CD4-positive, alpha-beta memory T cell (primary cell): ENCODE measurements at regions of chr14 and their contacts with region 1.

Region 1: DNA sequence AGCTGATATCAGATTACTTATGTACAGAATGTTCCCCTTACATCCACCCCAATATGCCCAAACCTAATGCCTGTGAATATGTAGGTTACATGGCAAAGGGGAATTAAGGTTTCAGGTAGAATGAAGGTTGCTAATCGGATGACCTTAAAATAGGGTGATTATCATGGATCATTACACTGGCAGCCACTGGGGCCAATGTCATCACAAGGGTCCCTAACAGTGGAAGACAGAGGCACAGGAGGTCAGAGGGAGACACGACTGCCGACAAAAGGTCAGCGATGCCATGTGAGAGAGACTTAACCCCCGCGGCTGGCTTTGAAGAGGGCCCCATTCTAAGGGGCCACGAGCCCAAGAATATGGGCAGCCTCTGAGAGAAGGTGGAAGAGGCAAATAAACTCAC is 106.8 kb upstream of the EVL start:
- DNase-seq: no peak
- H3K4me3 ChIP-seq: no peak overlapping the region
- H3K4me3 Mint-ChIP-seq: no peak overlapping the region
- H3K27ac ChIP-seq: no peak overlapping the region
- H3K27ac Mint-ChIP-seq: no peak overlapping the region
- H3K4me1 ChIP-seq: no peaks in the 10 kb centered on the region
- H3K4me1 Mint-ChIP-seq: no peaks in the 10 kb centered on the region
- H3K27me3 ChIP-seq: no peaks in the 10 kb centered on the region
- H3K27me3 Mint-ChIP-seq: peaks cover 7 to 25% of the 10 kb centered on the region in 2 donors

Region 2: DNA sequence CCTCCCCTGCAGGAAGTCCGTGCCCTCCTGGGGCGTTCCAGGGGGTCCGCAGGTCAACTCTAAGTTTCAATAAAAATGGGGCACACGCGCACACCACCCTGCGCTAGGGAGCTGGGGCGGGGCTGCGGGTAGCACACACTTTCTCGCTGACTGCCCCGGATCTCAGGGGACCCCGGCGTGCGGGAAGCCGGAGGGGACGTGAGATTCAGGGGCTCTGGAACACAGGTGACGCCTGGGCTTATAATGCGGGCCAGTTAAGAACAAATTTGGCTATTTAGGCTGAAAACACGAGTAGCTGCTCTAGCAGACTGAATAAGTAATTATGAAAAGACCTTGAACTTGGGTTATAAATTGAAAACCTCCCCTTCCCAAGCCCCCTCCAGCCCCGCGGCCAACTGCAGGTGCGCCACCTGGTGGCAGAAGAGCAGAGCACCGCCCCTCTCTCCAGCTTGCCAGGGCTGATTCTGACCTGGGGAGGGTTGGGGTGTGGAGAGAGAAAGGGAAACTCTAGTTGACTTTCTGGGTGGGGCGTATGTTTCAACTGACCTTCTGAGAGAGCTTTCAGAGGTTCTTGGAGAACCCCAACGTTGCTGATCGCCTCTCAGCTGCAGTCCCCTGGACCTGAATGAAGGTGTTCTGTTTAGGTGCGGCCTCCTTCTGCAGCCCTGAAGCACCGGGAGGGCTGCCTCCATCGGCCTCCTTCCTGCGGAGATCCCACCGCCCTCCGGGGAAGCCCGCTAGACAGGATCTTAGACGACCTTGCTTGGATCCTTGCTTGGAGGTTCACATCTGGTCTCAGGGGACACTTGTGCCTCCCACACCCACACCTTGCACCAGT is 11.5 kb before region 1 on chr14:
- CTCF ChIA-PET with region 1: interaction called, 12 read pairs
- POLR2A ChIA-PET with region 1: no interaction called
- intact Hi-C with region 1: no loop called
- DNase-seq: peak; percentile 34 to 47 (median 42)
- H3K4me3 ChIP-seq: no peak overlapping the region
- H3K4me3 Mint-ChIP-seq: peak overlapping the region; percentile 29 to 77 (median 67)
- H3K27ac ChIP-seq: no peak overlapping the region
- H3K27ac Mint-ChIP-seq: peak overlapping the region in 1 of 7 donors; percentile 35
- H3K4me1 ChIP-seq: peaks cover 14% of the 10 kb centered on the region
- H3K4me1 Mint-ChIP-seq: peaks cover 3 to 10% (median 8%) of the 10 kb centered on the region in 4 donors
- H3K27me3 ChIP-seq: peaks cover 13% of the 10 kb centered on the region
- H3K27me3 Mint-ChIP-seq: peaks cover 14 to 15% of the 10 kb centered on the region in 2 donors

Region 3: GRCh38 chr14:99995700-99996356 is 37.4 kb after region 1 on chr14:
- CTCF ChIA-PET with region 1: no interaction called
- POLR2A ChIA-PET with region 1: no interaction called
- intact Hi-C with region 1: no loop called
- DNase-seq: peak; percentile 49 to 65 (median 55)
- H3K4me3 ChIP-seq: no peak overlapping the region
- H3K4me3 Mint-ChIP-seq: no peak overlapping the region
- H3K27ac ChIP-seq: no peak overlapping the region
- H3K27ac Mint-ChIP-seq: no peak overlapping the region
- H3K4me1 ChIP-seq: no peaks in the 10 kb centered on the region
- H3K4me1 Mint-ChIP-seq: peaks cover 0 to 8% (median 3%) of the 10 kb centered on the region in 4 donors
- H3K27me3 ChIP-seq: no peaks in the 10 kb centered on the region
- H3K27me3 Mint-ChIP-seq: peaks cover 1 to 4% of the 10 kb centered on the region in 2 donors